CD4-positive, alpha-beta T cell (primary cell): ENCODE measurements at regions of chr2 and their contacts with region 1.

Region 1: GRCh38 chr2:74290466-74291217 is 52.6 kb downstream of the SLC4A5 start:
- DNase-seq: peak; percentile 12 to 82 (median 36)
- ATAC-seq: peak; percentile 80
- H3K4me3 ChIP-seq: peak overlapping the region; percentile 19
- H3K4me3 Mint-ChIP-seq: peak overlapping the region; percentile 68
- H3K27ac ChIP-seq: peak overlapping the region; percentile 64 to 77
- H3K27ac Mint-ChIP-seq: peak overlapping the region; percentile 83
- H3K4me1 ChIP-seq: peaks cover 26% of the 10 kb centered on the region
- H3K4me1 Mint-ChIP-seq: peaks cover 32% of the 10 kb centered on the region
- H3K27me3 ChIP-seq: no peaks in the 10 kb centered on the region
- H3K27me3 Mint-ChIP-seq: no peaks in the 10 kb centered on the region
- CTCF ChIP-seq: no peak

Region 2: DNA sequence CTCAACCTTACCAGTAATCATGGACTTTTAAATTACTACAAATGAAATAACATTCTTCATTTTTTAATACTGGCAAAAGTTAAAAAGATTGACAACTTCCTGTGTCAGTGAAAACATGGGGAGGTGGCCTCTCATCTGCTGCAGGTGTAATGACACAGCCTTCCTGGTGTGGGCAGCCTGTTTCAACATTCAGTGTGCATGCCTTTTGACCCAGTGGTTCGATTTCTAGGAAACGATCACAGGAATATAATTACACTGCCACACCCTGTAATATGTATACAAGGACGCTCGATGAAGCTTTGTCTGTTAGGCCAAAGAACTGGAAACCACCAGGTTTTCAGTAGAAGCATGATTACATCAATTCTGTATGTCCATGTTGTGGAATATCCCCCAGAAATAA is 23.6 kb before region 1 on chr2:
- CTCF ChIA-PET with region 1: no interaction called
- POLR2A ChIA-PET with region 1: interaction called, 5 read pairs
- intact Hi-C with region 1: loop called in 1 of 2 experiments (anchors 2 kb)
- DNase-seq: peak; percentile 26 to 85 (median 50)
- ATAC-seq: peak; percentile 100
- H3K4me3 ChIP-seq: peak overlapping the region; percentile 4
- H3K4me3 Mint-ChIP-seq: peak overlapping the region; percentile 5
- H3K27ac ChIP-seq: no peak overlapping the region
- H3K27ac Mint-ChIP-seq: peak overlapping the region; percentile 14
- H3K4me1 ChIP-seq: peaks cover 9% of the 10 kb centered on the region
- H3K4me1 Mint-ChIP-seq: peaks cover 35% of the 10 kb centered on the region
- H3K27me3 ChIP-seq: no peaks in the 10 kb centered on the region
- H3K27me3 Mint-ChIP-seq: no peaks in the 10 kb centered on the region
- CTCF ChIP-seq: peak; percentile 77